Caco-2 (cell line): ENCODE measurements at regions of chr19 and their contacts with region 1.

Region 1: GRCh38 chr19:58519355-58520256 is at the start of gene ZBTB45:
- DNase-seq: peak; percentile 94 to 95
- H3K4me3 ChIP-seq: peak within 1 kb of the TSS; percentile 55
- H3K4me3 Mint-ChIP-seq: peak within 1 kb of the TSS; percentile 85
- H3K27ac Mint-ChIP-seq: peak within 1 kb of the TSS; percentile 85
- H3K4me1 ChIP-seq: peaks cover 13% of the 10 kb centered on the region
- H3K4me1 Mint-ChIP-seq: peaks cover 20% of the 10 kb centered on the region
- H3K27me3 ChIP-seq: no peaks in the 10 kb centered on the region
- H3K27me3 Mint-ChIP-seq: no peaks in the 10 kb centered on the region
- CTCF ChIP-seq: peak; percentile 64 to 93
- total RNA-seq, gene ZBTB45: 14.6 and 14.8 TPM in 2 replicates

Region 2: GRCh38 chr19:58326914-58327726 is 192.5 kb before region 1 on chr19 and contains the start of gene ZSCAN22:
- CTCF ChIA-PET with region 1: no interaction called
- POLR2A ChIA-PET with region 1: no interaction called
- intact Hi-C with region 1: loop called (anchors 2 kb)
- DNase-seq: peak; percentile 95 to 96
- H3K4me3 ChIP-seq: peak within 1 kb of the TSS; percentile 79
- H3K4me3 Mint-ChIP-seq: no peak within 1 kb of the TSS
- H3K27ac Mint-ChIP-seq: no peak within 1 kb of the TSS
- H3K4me1 ChIP-seq: peaks cover 4% of the 10 kb centered on the region; the same call in 1 of the 2 replicates
- H3K4me1 Mint-ChIP-seq: peaks cover 5% of the 10 kb centered on the region
- H3K27me3 ChIP-seq: no peaks in the 10 kb centered on the region
- H3K27me3 Mint-ChIP-seq: no peaks in the 10 kb centered on the region
- CTCF ChIP-seq: no peak
- total RNA-seq, gene ZSCAN22: 4.0 and 4.3 TPM in 2 replicates

Region 3: GRCh38 chr19:58434217-58434616 is 85.4 kb before region 1 on chr19:
- CTCF ChIA-PET with region 1: no interaction called
- POLR2A ChIA-PET with region 1: no interaction called
- intact Hi-C with region 1: no loop called
- DNase-seq: no peak
- H3K4me3 ChIP-seq: no peak overlapping the region
- H3K4me3 Mint-ChIP-seq: no peak overlapping the region
- H3K27ac Mint-ChIP-seq: no peak overlapping the region
- H3K4me1 ChIP-seq: no peaks in the 10 kb centered on the region
- H3K4me1 Mint-ChIP-seq: no peaks in the 10 kb centered on the region
- H3K27me3 ChIP-seq: no peaks in the 10 kb centered on the region; the same call in 1 of the 2 replicates
- H3K27me3 Mint-ChIP-seq: peaks cover 3% of the 10 kb centered on the region
- CTCF ChIP-seq: no peak

Region 4: GRCh38 chr19:58466760-58467589 is 52.6 kb before region 1 on chr19 and contains the start of gene ZNF324:
- CTCF ChIA-PET with region 1: no interaction called
- POLR2A ChIA-PET with region 1: no interaction called
- intact Hi-C with region 1: loop called (anchors 2 kb)
- DNase-seq: peak; percentile 98 to 99
- H3K4me3 ChIP-seq: peak within 1 kb of the TSS; percentile 97
- H3K4me3 Mint-ChIP-seq: peak within 1 kb of the TSS; percentile 81
- H3K27ac Mint-ChIP-seq: peak within 1 kb of the TSS; percentile 60
- H3K4me1 ChIP-seq: no peaks in the 10 kb centered on the region
- H3K4me1 Mint-ChIP-seq: peaks cover 11% of the 10 kb centered on the region
- H3K27me3 ChIP-seq: no peaks in the 10 kb centered on the region
- H3K27me3 Mint-ChIP-seq: no peaks in the 10 kb centered on the region
- CTCF ChIP-seq: peak in 1 of 2 experiments; percentile 2
- total RNA-seq, gene ZNF324: 9.8 and 10.6 TPM in 2 replicates

Region 5: GRCh38 chr19:58538257-58539168 is 18.9 kb after region 1 on chr19:
- CTCF ChIA-PET with region 1: interaction called, 22 read pairs
- POLR2A ChIA-PET with region 1: interaction called, 37 read pairs
- intact Hi-C with region 1: loop called (anchors 1 kb)
- DNase-seq: peak; percentile 89 to 94
- H3K4me3 ChIP-seq: peak overlapping the region; percentile 45
- H3K4me3 Mint-ChIP-seq: peak overlapping the region; percentile 87
- H3K27ac Mint-ChIP-seq: peak overlapping the region; percentile 92
- H3K4me1 ChIP-seq: 0 out of 2 replicates have a peak, but pooled peaks cover 5% of the 10 kb centered on the region
- H3K4me1 Mint-ChIP-seq: peaks cover 7% of the 10 kb centered on the region
- H3K27me3 ChIP-seq: no peaks in the 10 kb centered on the region
- H3K27me3 Mint-ChIP-seq: peaks cover 6% of the 10 kb centered on the region
- CTCF ChIP-seq: no peak

Region 6: DNA sequence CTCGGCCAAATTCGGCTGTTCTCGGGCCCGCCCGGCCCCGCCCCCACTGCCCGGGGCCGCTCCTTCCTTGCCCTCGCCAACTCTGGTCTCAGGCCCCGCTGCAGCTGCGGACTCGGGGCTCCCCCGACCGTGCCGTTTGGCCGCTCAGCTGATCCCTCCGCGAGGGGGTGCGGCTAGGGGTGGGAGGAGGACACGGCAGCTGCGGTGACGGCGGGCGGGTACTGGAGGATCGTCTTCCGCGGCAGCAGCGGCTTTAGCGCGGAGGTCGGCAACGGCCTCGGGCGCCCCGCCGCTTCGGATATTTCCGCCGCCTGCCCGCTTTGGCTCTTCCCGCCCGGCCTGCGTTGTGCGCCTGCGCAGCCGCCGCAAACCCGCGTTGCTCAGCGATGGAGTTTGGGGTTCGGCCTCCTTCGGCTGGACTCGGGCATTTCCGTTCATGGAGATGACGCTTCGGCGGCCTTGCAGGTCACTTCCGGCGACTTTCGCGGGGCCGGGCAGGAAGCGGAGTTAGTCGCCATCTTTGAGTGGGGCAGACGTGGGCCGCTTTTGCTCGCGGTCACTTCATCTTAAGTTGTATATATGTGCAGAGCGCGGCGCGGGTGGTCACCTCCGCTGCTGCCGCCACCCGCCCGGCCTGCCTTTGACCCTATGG is 39.1 kb after region 1 on chr19:
- CTCF ChIA-PET with region 1: interaction called, 5 read pairs
- POLR2A ChIA-PET with region 1: interaction called, 14 read pairs
- intact Hi-C with region 1: loop called (anchors 1 kb)
- DNase-seq: peak; percentile 99
- H3K4me3 ChIP-seq: peak overlapping the region; percentile 69
- H3K4me3 Mint-ChIP-seq: peak overlapping the region; percentile 99
- H3K27ac Mint-ChIP-seq: peak overlapping the region; percentile 98
- H3K4me1 ChIP-seq: peaks cover 15% of the 10 kb centered on the region; the same call in 1 of the 2 replicates
- H3K4me1 Mint-ChIP-seq: peaks cover 31% of the 10 kb centered on the region
- H3K27me3 ChIP-seq: no peaks in the 10 kb centered on the region
- H3K27me3 Mint-ChIP-seq: no peaks in the 10 kb centered on the region
- CTCF ChIP-seq: no peak